IMR-90 (cell line): ENCODE measurements at regions of chr11 and their contacts with region 1.

Region 1: GRCh38 chr11:12888525-12889158 is 120.5 kb upstream of the RASSF10 start:
- DNase-seq: peak; percentile 90
- ATAC-seq: peak; percentile 75
- H3K4me3 ChIP-seq: no peak overlapping the region
- H3K27ac ChIP-seq: peak overlapping the region; percentile 60; the same call in 1 of the 2 replicates
- H3K4me1 ChIP-seq: peaks cover 22% of the 10 kb centered on the region
- H3K27me3 ChIP-seq: no peaks in the 10 kb centered on the region
- CTCF ChIP-seq: peak; percentile 83
- POLR2A ChIP-seq: 0 out of 2 replicates have a peak, but pooled peaks have one; percentile 22
- RAD21 ChIP-seq: peak; percentile 81

Region 2: GRCh38 chr11:12318791-12319438 is 569.7 kb before region 1 on chr11:
- CTCF ChIA-PET with region 1: no interaction called
- POLR2A ChIA-PET with region 1: no interaction called
- dilution Hi-C with region 1: no loop called
- in situ Hi-C with region 1: loop called (anchors 10 kb)
- intact Hi-C with region 1: no loop called
- DNase-seq: peak; percentile 89
- ATAC-seq: peak; percentile 70
- H3K4me3 ChIP-seq: no peak overlapping the region
- H3K27ac ChIP-seq: peak overlapping the region; percentile 96
- H3K4me1 ChIP-seq: peaks cover 23% of the 10 kb centered on the region
- H3K27me3 ChIP-seq: no peaks in the 10 kb centered on the region
- CTCF ChIP-seq: no peak
- POLR2A ChIP-seq: no peak
- RAD21 ChIP-seq: no peak

Region 3: DNA sequence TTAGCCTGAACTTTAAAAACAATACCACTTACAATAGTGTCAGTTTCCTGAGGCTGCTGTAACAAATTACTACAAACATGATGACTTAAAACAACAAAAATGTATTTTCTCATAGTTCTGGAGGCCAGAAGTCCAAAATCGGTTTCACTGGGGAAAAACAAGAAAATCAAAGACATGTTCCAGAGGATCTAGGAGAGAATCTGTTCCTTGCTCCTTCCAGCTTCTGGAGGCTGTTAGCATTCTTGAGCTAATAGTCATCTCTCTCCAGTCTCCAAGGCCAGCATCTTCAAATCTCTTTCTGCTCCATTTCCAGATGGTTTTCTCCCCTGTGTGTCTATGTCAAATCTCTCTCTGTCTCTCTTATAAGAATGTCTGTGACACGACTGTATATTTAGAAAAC is 282.0 kb before region 1 on chr11:
- CTCF ChIA-PET with region 1: no interaction called
- POLR2A ChIA-PET with region 1: no interaction called
- dilution Hi-C with region 1: no loop called
- in situ Hi-C with region 1: no loop called
- intact Hi-C with region 1: no loop called
- DNase-seq: peak; percentile 90
- ATAC-seq: peak; percentile 98
- H3K4me3 ChIP-seq: no peak overlapping the region
- H3K27ac ChIP-seq: no peak overlapping the region
- H3K4me1 ChIP-seq: peaks cover 2% of the 10 kb centered on the region
- H3K27me3 ChIP-seq: no peaks in the 10 kb centered on the region
- CTCF ChIP-seq: no peak
- POLR2A ChIP-seq: no peak
- RAD21 ChIP-seq: no peak

Region 4: DNA sequence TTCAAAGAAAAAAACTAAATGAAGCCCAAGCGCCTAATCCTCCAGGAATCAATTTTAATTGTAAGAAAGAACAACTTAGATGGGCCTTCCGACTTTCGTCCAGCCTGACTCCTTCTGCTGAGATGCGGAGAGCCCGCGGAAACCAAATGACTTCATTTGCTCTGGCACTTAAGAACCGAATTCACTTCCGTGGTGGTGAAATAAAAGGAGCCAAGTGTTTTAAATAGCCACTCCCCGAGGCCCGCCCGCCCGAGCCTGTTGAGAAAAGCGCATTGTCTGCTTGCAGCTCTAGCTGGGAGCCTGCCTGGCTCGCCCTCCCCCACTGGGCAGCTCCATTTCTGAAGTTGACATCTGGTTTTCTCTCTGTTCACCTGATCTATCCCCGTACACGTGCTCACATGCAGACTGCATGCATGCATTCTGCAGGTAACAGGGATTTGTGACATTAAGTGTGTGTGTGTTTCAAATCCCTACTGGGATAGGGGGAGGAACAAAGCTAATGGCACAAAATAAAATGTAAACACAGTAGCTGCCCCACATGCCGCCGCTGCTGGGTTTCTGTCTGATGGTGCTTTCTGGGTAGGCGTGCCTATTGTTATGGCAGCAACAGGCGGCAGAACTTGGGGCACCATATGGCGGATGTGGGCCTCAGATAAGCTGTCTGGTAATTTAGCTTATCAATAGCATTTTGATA is 208.2 kb before region 1 on chr11:
- CTCF ChIA-PET with region 1: interaction called, 7 read pairs
- POLR2A ChIA-PET with region 1: no interaction called
- dilution Hi-C with region 1: loop called (anchors 25 kb)
- in situ Hi-C with region 1: loop called (anchors 5 kb)
- intact Hi-C with region 1: loop called (anchors 2 kb)
- DNase-seq: peak; percentile 91
- ATAC-seq: peak; percentile 66
- H3K4me3 ChIP-seq: no peak overlapping the region
- H3K27ac ChIP-seq: peak overlapping the region; percentile 61; the same call in 1 of the 2 replicates
- H3K4me1 ChIP-seq: peaks cover 36% of the 10 kb centered on the region
- H3K27me3 ChIP-seq: no peaks in the 10 kb centered on the region
- CTCF ChIP-seq: no peak
- POLR2A ChIP-seq: peak; percentile 73
- RAD21 ChIP-seq: no peak

Region 5: DNA sequence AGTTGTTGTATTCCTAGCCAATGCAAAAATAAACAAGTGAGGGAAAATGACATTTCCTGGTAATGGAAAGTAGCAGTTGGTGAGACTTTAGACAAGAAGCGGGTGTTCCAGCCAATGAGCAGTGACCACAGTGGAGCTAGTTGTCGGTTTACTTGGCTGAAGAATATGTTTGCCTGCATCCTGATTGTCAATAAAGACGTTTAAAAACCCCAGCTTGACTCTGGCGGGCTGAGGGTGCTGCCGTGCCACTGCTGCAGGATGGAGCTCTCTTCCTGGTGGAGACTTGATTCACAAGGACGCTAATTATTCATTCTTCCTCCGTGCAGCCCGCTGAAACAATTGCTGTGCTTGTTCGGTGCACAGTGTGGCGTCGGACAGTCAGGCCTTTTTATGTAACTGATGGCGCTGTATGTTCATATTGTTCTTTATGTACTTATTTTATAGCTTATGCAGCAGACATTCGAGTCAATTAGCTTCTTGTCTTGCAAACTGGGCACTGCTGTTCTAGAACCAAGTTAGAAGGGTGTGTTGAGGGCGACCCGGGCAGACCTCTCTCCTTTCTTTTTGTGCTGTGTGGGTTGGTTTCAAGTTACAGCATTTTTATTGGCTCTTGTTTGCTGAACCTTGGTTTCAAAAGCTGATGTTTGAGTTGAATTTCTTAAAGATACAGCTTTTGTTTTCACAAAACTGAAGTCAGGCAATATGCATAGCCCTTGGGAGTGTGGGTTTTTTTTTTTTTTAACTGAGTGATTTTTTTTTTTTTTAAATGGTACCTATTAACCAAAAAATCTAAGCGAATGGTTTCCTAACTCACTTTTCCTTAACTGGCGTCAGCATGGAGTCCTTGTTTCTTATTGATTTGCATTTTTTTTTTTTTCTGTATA is 60.5 kb before region 1 on chr11:
- CTCF ChIA-PET with region 1: interaction called, 12 read pairs
- POLR2A ChIA-PET with region 1: no interaction called
- dilution Hi-C with region 1: no loop called
- in situ Hi-C with region 1: no loop called
- intact Hi-C with region 1: no loop called
- DNase-seq: peak; percentile 79
- ATAC-seq: peak; percentile 81
- H3K4me3 ChIP-seq: peak overlapping the region; percentile 46
- H3K27ac ChIP-seq: peak overlapping the region; percentile 11
- H3K4me1 ChIP-seq: peaks cover 16% of the 10 kb centered on the region
- H3K27me3 ChIP-seq: no peaks in the 10 kb centered on the region
- CTCF ChIP-seq: no peak
- POLR2A ChIP-seq: no peak
- RAD21 ChIP-seq: no peak

Region 6: GRCh38 chr11:13105237-13105844 is 216.7 kb after region 1 on chr11:
- CTCF ChIA-PET with region 1: no interaction called
- POLR2A ChIA-PET with region 1: no interaction called
- dilution Hi-C with region 1: no loop called
- in situ Hi-C with region 1: no loop called
- intact Hi-C with region 1: no loop called
- DNase-seq: no peak
- ATAC-seq: no peak
- H3K4me3 ChIP-seq: no peak overlapping the region
- H3K27ac ChIP-seq: no peak overlapping the region
- H3K4me1 ChIP-seq: no peaks in the 10 kb centered on the region
- H3K27me3 ChIP-seq: peaks cover 43% of the 10 kb centered on the region
- CTCF ChIP-seq: no peak
- POLR2A ChIP-seq: no peak
- RAD21 ChIP-seq: no peak